K562 (cell line): ENCODE measurements at regions of chr17 and their contacts with region 1.

Region 1: DNA sequence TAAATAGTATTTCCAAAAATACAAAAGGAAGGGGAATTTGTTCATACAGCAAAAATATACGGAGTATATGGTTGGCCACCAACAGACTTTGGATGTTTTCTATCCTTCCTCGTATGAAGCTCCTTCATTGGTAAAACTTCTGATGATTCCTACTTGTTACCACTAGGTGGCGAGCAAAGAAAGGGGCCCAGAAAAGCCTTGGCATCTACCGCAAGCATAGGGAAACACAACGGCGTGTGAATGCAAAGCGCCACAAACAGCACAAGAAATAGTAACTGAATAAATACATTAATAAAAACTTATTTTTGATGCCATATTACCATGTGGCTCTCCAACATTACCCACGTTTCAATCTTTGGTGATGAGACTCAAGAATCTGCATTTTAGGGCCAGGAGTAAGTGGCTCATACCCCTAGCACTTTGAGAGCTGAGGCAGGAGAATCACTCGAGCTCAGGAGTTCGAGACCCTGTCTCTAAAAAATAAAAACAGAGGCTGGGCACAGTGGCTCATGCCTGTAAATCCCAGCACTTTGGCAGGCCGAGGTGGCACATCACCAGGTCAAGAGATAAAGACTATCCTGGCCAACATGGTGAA is 34.5 kb downstream of the YWHAE start:
- DNase-seq: peak; percentile 40 to 71 (median 45)
- ATAC-seq: peak; percentile 87
- H3K4me3 ChIP-seq: no peak overlapping the region
- H3K27ac ChIP-seq: no peak overlapping the region
- H3K4me1 ChIP-seq: no peaks in the 10 kb centered on the region; a peak in 1 of 5 replicates
- H3K27me3 ChIP-seq: no peaks in the 10 kb centered on the region
- CTCF ChIP-seq: peak; percentile 68 to 75 (median 74)
- EP300 ChIP-seq: no peak
- POLR2A ChIP-seq: no peak
- RAD21 ChIP-seq: peak; percentile 70 to 75

Region 2: DNA sequence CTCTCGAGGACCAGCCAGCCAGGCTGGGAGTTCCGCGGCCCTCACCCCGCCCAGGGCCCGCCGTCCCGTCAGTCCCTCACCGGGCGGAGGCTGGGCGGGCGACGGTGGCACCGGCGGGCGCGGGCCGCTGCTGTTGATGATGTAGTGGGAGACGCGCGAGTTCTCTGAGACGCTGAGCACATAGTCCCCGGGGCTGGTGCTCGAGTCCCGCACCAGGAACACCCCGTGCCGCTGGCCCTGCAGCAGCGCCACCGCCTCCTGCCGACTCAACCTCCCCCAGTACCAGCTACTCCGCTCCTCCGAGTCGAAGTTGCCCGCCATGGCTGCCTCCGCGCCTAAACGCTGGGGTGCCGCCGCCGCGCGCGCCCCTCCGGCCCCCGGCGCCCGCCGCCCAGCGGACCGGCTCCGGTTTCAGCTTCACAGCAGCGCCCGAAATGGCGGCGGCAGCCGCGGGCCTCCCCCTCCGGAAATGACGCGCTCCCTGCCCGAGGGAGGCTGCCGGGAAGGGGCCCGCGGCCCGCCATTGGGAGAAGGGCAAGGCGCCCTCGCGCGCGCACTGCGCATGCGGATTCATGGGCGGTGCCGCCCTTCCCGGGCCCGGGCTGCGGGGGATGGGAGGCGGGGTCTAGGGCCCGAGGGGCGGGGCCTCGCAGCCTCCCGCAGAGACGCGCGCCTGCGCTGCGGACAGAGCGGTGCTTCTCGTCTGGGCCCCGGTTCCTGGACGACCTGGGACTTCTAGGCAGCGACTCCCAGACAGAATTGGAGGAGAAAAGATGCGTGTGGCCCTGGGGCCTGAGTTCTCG is 90.5 kb after region 1 on chr17 and contains the start of gene CRK:
- CTCF ChIA-PET with region 1: interaction called, 5 read pairs
- POLR2A ChIA-PET with region 1: interaction called, 3 read pairs
- in situ Hi-C with region 1: no loop called
- intact Hi-C with region 1: loop called (anchors 2 kb)
- DNase-seq: peak; percentile 94 to 98 (median 98)
- ATAC-seq: peak; percentile 90
- H3K4me3 ChIP-seq: peak within 1 kb of the TSS; percentile 97
- H3K27ac ChIP-seq: peak within 1 kb of the TSS; percentile 86
- H3K4me1 ChIP-seq: peaks cover 13 to 20% of the 10 kb centered on the region in 2 experiments
- H3K27me3 ChIP-seq: no peaks in the 10 kb centered on the region
- CTCF ChIP-seq: peak in 1 of 3 experiments; percentile 18; a peak in 2 of 6 replicates
- EP300 ChIP-seq: peak; percentile 29; the same call in 1 of the 2 replicates
- POLR2A ChIP-seq: peak; percentile 90
- RAD21 ChIP-seq: no peak
- polyA plus RNA-seq, gene CRK: 13.1 to 17.7 TPM